Activated T-helper 1 cell treated with anti-CD3 and anti-CD28 coated beads, Interleukin-12 subunit alpha, Interleukin-12 subunit beta, Interleukin-2, Interleukin-4 antibody, amounts not matched to agents 30 ng/mL and 10 ng/mL and 1 ng/mL, durations not matched to agents 14 hours and 24 hours and 36 hours (primary cell): ENCODE measurements at regions of chr2 and their contacts with region 1.

Region 1: DNA sequence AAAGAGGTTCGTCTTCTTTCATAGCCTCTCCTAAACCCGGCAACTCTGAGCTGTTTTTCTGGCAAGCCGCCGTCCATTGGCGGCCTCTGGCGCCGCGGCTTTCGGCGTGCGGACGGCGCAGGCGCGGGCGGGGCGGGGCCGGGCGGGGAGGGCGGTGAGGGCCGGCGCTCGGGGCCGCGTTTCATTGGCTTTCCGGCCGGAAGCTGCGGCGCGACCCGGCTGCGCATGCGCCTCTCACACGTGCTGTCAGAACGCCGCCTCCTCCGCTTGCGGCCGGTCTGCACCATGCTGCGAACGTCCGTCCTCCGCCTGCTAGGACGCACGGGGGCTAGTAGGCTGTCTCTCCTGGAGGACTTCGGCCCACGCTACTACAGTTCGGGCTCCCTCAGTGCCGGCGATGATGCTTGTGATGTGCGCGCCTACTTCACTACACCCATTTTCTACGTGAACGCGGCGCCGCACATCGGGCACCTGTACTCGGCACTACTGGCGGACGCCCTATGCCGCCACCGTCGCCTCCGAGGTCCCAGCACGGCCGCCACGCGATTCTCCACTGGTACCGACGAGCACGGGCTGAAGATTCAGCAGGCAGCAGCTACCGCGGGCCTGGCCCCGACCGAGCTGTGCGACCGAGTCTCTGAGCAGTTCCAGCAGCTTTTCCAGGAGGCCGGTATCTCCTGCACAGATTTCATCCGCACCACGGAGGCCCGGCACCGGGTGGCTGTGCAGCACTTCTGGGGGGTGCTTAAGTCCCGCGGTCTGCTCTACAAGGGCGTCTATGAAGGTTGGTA is at the start of gene MARS2:
- DNase-seq: peak; percentile 91
- H3K4me3 Mint-ChIP-seq: peak within 1 kb of the TSS; percentile 94
- H3K27ac Mint-ChIP-seq: peak within 1 kb of the TSS; percentile 85
- H3K4me1 Mint-ChIP-seq: peaks cover 60% of the 10 kb centered on the region
- H3K27me3 Mint-ChIP-seq: peaks cover 3% of the 10 kb centered on the region
- total RNA-seq, gene MARS2: 22.6 and 22.9 TPM in 2 replicates

Region 2: DNA sequence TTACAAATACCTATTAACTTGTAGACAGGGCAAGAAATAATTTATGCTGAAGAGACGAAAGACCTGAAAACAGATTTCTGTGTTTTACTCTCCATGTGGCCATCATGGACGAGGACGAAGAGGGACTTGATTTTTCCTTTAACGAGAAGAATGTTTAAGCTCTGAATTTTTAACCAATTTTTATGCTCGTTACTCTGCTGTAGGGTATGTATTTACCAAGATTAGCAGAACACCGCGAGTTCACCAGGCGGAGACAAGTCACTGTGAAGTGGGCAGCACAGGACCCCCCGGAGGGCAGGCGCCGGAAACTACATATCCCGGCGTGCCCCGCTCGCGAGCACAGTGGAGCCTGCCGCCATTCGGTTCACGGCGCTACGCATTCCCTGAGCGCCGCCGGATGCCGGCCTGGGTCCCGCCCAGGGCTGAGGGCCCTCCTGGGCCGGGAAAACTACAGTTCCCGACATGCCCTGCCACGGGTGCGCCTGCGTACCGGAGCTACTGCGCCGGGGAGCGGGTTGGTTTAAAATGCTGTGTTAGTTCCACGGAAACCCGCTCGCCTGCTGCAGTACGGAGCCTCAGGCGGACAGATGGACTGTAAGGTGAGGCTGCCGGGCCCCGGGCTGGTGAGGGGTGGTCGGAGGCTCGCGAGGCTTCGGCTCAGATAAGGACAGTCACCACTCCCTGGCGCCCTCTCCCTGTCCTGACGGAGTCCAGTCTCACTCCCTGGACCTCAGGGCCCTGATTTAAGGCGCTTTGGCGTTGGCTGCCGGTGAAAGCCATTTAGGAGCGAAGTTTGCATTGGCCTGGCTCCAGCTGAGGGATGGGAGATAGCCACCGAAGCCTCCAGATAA is 1065.9 kb before region 1 on chr2 and contains the start of gene CCDC150:
- intact Hi-C with region 1: loop called (anchors 1 kb)
- DNase-seq: peak; percentile 93
- H3K4me3 Mint-ChIP-seq: peak within 1 kb of the TSS; percentile 78
- H3K27ac Mint-ChIP-seq: peak within 1 kb of the TSS; percentile 81
- H3K4me1 Mint-ChIP-seq: peaks cover 28% of the 10 kb centered on the region
- H3K27me3 Mint-ChIP-seq: peaks cover 13% of the 10 kb centered on the region
- total RNA-seq, gene CCDC150: 16.7 and 19.6 TPM in 2 replicates

Region 3: DNA sequence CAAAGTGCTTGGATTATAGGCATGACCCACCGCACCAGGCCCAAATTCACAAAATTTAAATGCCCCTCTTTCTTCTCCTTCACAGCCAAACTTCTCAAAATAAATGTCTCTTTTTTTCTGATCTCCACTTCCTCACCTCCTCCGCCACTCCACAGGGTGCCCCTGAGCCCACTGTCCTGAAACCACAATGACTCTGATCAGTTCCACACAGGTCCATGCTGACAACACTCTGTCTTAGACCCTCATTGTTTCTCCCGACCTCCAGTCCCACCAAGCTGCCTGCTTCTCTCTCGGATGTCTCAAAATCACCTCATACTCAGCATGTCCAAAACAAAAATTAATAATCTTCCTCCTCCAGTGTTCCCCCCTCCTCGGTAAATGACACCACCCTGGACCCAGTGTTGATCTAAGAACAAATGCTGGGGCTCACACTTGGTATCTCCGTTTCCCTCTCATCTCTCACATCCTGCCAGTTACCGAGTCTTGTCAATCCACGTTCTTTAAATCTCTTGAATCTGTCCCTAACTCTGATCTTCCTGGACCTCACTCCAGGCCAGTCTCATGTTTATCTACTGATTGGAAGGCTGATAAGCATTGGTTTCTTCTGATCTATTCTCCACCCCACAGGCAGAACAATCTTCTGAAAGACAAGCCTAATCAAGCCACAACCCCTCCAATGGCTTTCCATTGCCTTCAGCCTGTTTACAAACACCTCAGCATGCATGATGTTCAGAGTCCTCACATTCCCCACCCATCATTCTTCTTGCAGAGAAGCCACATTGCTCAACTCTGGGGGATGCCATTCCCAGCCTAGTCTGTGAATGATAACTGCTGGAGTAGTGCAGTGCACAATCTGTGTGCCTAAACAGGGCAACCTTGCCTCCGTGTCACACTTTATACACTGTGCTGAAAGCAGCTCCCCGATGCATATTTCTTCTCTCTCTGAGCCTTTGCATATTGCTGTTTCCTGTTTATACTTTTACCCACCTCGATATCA is 382.3 kb before region 1 on chr2:
- intact Hi-C with region 1: loop called (anchors 5 kb)
- DNase-seq: no peak
- H3K4me3 Mint-ChIP-seq: peak overlapping the region; percentile 71
- H3K27ac Mint-ChIP-seq: peak overlapping the region; percentile 87
- H3K4me1 Mint-ChIP-seq: peaks cover 50% of the 10 kb centered on the region
- H3K27me3 Mint-ChIP-seq: no peaks in the 10 kb centered on the region

Region 4: DNA sequence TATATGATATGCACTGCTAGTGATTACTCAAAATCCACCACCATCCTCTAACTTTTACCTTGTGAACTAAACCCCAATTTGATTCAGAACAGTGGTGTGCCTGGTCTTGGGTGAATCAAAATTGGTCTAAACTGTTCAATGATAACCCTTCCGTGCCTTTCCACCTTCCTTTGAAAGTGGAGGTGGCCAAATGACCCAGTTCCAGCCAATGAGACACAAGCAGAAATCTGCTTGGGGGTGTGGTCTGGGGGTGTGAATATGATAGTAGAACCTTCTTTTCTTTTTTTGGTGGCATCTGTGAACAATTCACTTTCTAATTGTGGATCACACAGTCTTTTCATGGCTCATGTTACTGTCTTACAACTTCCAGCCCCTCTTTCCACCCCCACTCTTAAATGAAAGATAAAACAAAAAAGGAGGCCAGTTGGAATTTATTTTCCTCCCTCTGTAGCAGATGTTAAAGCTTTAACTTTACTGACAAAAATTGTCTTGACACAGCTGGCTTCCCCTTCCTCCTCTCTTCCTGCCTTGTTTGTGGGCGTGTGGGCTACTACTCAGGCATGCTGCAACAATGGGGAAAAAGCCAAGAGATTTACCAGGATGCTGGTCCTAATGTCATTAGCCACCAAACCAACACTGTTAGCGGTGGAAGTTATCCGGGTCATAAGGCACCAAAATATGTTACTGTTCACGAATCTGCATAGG is 335.9 kb before region 1 on chr2:
- intact Hi-C with region 1: no loop called
- DNase-seq: no peak
- H3K4me3 Mint-ChIP-seq: no peak overlapping the region
- H3K27ac Mint-ChIP-seq: no peak overlapping the region
- H3K4me1 Mint-ChIP-seq: peaks cover 12% of the 10 kb centered on the region
- H3K27me3 Mint-ChIP-seq: no peaks in the 10 kb centered on the region

Region 5: GRCh38 chr2:197499594-197500526 is 205.5 kb before region 1 on chr2 and contains the starts of genes HSPD1 and HSPE1:
- intact Hi-C with region 1: loop called (anchors 1 kb)
- DNase-seq: peak; percentile 98
- H3K4me3 Mint-ChIP-seq: peak within 1 kb of the TSS; percentile 100
- H3K27ac Mint-ChIP-seq: peak within 1 kb of the TSS; percentile 99
- H3K4me1 Mint-ChIP-seq: peaks cover 50% of the 10 kb centered on the region
- H3K27me3 Mint-ChIP-seq: no peaks in the 10 kb centered on the region
- total RNA-seq, gene HSPD1: 811 and 821 TPM in 2 replicates
- total RNA-seq, gene HSPE1: 325 and 343 TPM in 2 replicates

Region 6: GRCh38 chr2:197728338-197729207 is 23.3 kb after region 1 on chr2:
- intact Hi-C with region 1: no loop called
- DNase-seq: no peak
- H3K4me3 Mint-ChIP-seq: no peak overlapping the region
- H3K27ac Mint-ChIP-seq: no peak overlapping the region
- H3K4me1 Mint-ChIP-seq: no peaks in the 10 kb centered on the region
- H3K27me3 Mint-ChIP-seq: peaks cover 6% of the 10 kb centered on the region

Region 7: DNA sequence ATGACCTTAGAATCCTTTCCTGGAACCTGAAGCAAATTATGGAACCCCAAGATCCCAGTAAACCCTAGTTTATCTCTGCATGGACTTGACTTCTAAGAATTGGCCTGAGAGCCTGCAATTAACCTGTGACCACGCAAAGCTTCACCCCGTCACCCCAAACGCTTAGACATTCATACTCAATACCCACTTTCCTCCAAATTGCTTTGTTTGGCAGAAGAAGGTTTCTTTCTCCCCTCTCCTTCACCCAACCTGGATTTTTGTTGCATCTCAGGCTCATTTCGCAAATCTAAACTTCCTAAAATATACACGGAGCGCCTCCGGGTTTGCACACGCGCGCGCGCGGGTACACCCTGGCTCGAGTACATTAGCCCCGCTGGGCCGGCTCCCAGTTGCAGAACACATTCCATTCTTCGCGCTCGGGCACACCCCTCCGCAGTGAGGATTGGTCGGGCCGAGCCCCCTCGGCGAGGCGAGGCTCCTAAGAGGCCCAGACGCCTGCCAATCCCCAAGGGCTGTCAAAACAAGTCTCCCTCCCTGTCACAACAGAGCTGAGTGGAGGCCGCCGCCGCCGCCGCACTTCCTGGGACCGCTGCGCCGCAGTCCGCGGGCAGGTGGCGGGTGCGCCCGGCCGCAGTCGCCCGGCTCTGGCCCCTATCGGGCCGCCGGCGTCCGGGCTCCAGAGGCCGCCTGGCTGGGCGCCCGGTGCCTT is 98.9 kb after region 1 on chr2 and contains the start of gene PLCL1:
- intact Hi-C with region 1: loop called (anchors 1 kb)
- DNase-seq: peak; percentile 88
- H3K4me3 Mint-ChIP-seq: peak within 1 kb of the TSS; percentile 92
- H3K27ac Mint-ChIP-seq: no peak within 1 kb of the TSS
- H3K4me1 Mint-ChIP-seq: peaks cover 34% of the 10 kb centered on the region
- H3K27me3 Mint-ChIP-seq: peaks cover 29% of the 10 kb centered on the region
- total RNA-seq, gene PLCL1: 0.62 and 0.78 TPM in 2 replicates

Region 8: DNA sequence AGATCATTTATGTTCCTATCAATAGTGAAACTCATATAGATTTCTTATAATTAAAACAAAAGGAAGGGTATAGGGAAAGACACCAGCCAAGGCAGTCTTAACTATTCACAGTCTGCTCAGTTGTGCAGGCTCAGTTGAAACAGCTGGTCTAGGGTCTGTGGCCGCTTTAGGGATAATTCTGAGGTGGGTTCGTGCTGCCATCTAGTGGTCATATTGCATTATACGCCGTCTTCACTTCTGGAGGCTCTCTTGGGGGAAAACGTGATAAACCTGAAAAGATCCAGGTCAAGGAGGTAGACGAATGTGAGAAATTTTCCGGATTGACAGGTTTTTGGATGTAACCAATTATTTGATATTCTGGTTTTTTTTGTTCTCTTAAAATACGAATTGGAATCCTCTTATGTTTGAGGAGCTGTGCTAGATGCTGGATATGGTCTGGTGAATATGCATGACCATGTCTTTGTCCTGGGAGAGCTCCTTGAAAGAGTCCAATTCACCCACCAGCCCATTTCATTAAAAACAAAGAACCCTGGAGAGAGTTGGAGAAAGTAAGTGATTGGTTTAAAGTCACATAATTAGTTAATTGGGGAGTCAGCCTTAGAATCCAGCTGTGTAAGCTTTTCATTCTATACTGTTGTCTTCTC is 591.5 kb after region 1 on chr2:
- intact Hi-C with region 1: loop called (anchors 1 kb)
- DNase-seq: peak; percentile 20
- H3K4me3 Mint-ChIP-seq: no peak overlapping the region
- H3K27ac Mint-ChIP-seq: no peak overlapping the region
- H3K4me1 Mint-ChIP-seq: no peaks in the 10 kb centered on the region
- H3K27me3 Mint-ChIP-seq: peaks cover 20% of the 10 kb centered on the region